CD4-positive, alpha-beta memory T cell (primary cell): ENCODE measurements at regions of chr15 and their contacts with region 1.

Region 1: GRCh38 chr15:29747837-29748417 is 74.3 kb downstream of the TJP1 start:
- DNase-seq: peak in 1 of 5 donors; percentile 1
- H3K4me3 ChIP-seq: no peak overlapping the region
- H3K4me3 Mint-ChIP-seq: no peak overlapping the region
- H3K27ac ChIP-seq: no peak overlapping the region
- H3K27ac Mint-ChIP-seq: no peak overlapping the region
- H3K4me1 ChIP-seq: no peaks in the 10 kb centered on the region
- H3K4me1 Mint-ChIP-seq: no peaks in the 10 kb centered on the region
- H3K27me3 ChIP-seq: no peaks in the 10 kb centered on the region
- H3K27me3 Mint-ChIP-seq: peaks cover 2 to 11% of the 10 kb centered on the region in 2 donors

Region 2: DNA sequence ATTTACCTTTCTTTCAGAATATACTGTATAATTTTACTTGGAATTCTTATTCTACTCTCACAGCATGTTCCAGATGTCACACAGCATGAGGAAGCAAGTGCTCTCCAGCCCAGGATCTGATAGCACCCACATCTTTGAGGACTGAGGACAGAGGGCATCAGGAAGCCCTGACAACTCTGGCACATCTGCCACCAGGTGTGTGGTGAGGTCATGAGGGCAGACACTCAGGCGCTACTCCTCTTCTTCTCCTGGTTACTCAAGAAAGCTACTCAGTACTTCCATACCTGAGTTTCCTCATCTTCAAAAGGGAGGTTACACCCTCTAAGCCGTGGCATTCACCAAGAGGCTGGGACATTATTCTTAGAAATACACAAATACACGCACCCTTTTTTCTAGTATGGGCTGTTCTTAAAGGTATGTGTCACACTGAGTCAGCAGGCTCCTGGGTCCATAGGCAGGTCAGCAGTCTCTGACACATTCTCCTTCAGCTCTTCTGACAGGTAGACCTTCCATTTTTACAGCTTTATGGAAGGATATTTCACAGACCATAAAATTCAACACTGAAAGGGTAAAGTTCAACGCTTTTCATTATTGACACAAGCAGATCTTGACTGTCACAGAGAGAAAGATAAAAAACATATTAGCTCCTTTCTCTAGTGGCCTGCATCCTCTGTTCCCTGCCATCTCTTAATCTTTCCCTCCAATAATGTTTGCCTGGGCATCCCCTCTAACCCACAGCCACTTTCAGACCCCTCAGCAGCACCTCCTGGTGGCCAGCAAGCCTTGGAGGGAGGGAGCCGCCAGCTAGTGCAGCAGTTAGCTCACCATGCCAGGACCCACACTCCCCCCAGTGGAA is 177.5 kb after region 1 on chr15:
- CTCF ChIA-PET with region 1: interaction called, 15 read pairs
- POLR2A ChIA-PET with region 1: no interaction called
- intact Hi-C with region 1: loop called (anchors 5 kb)
- DNase-seq: peak in 1 of 5 donors; percentile 0
- H3K4me3 ChIP-seq: no peak overlapping the region
- H3K4me3 Mint-ChIP-seq: no peak overlapping the region
- H3K27ac ChIP-seq: no peak overlapping the region
- H3K27ac Mint-ChIP-seq: no peak overlapping the region
- H3K4me1 ChIP-seq: no peaks in the 10 kb centered on the region
- H3K4me1 Mint-ChIP-seq: no peaks in the 10 kb centered on the region
- H3K27me3 ChIP-seq: no peaks in the 10 kb centered on the region
- H3K27me3 Mint-ChIP-seq: peaks cover 11 to 19% of the 10 kb centered on the region in 2 donors

Region 3: DNA sequence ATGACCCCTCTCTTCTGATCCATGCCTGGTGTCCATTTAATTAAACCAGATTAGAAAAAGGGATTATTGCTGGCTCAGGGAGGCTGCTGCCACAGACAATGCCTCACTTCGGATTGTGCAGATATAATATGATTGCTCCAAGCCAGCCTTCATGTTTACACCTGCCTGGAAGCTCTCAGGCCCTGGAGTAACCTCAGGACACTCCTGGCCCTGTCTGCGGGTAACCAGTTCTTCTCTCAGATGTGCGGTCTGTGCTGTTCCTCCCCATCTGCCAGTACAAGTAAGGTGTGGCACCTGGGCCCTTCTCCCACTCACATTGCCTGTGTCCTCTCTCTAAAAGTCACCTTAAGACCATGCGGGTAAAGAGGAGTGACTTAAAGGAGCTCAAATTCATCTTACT is 326.0 kb after region 1 on chr15:
- CTCF ChIA-PET with region 1: interaction called, 8 read pairs
- POLR2A ChIA-PET with region 1: no interaction called
- intact Hi-C with region 1: loop called (anchors 10 kb)
- DNase-seq: no peak
- H3K4me3 ChIP-seq: no peak overlapping the region
- H3K4me3 Mint-ChIP-seq: no peak overlapping the region
- H3K27ac ChIP-seq: no peak overlapping the region
- H3K27ac Mint-ChIP-seq: no peak overlapping the region
- H3K4me1 ChIP-seq: no peaks in the 10 kb centered on the region
- H3K4me1 Mint-ChIP-seq: peaks cover 0 to 3% (median 0%) of the 10 kb centered on the region in 4 donors
- H3K27me3 ChIP-seq: no peaks in the 10 kb centered on the region
- H3K27me3 Mint-ChIP-seq: peaks cover 8 to 15% of the 10 kb centered on the region in 2 donors